Activated CD8-positive, alpha-beta T cell treated with anti-CD3 and anti-CD28 coated beads, Interleukin-2, amount 10 ng/mL, durations not matched to agents 7 days and 5 days (primary cell): ENCODE measurements at regions of chr20 and their contacts with region 1.

Region 1: DNA sequence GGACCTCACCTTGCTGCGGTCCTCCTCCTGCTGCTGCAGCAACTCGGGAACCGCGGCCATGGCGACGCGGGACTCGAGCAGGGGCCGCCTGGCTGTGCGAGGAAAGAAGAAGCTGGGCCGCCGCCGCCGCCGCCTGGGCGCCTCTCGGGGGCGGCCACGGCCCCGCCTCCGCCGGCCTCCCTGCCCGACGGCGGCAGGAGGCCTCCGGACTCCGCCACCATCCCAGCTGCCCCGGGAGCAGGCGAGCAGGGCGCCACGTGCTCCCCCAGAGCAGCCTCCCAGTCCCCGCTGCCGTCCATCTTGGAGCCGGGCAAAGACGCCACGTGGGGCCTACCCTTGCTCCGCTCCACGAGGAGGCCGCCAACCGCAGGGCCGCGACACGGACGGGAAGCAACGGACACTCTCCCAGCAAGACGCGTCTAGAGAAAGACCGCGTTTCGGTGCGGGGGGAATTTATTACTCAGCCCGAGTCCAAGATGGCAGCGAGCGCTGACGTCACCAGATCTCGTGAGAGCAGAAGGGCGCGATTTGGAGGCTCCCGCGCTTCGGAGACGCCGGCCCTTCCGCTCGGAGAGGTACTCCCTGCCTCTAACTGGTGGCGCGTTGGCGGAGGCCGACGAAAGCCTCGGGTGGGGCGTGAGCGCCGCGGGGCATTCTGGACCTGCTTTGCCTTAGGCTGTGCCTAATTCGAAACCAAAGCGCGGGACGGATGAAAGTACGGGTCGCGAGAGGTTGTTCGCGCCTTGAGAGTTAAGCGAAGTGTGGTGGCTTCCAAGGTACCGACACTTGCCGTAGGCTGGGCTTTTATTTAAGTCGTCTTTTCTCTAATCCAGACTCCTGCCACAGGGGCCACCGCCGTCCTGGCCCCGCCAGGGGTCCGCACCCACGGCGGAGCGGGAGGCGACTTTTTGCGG is at the starts of genes MGME1 and SNX5:
- DNase-seq: peak; percentile 100
- ATAC-seq: peak; percentile 94
- H3K4me3 Mint-ChIP-seq: peak within 1 kb of the TSS; percentile 99
- H3K27ac Mint-ChIP-seq: peak within 1 kb of the TSS; percentile 99
- H3K4me1 Mint-ChIP-seq: peaks cover 49% of the 10 kb centered on the region
- H3K27me3 Mint-ChIP-seq: no peaks in the 10 kb centered on the region
- total RNA-seq, gene MGME1: 39.4 to 46.9 TPM
- total RNA-seq, gene SNX5: 168 to 177 TPM

Region 2: GRCh38 chr20:17315407-17316231 is 653.0 kb before region 1 on chr20:
- CTCF ChIA-PET with region 1: no interaction called
- POLR2A ChIA-PET with region 1: no interaction called
- DNase-seq: no peak
- ATAC-seq: no peak
- H3K4me3 Mint-ChIP-seq: no peak overlapping the region
- H3K27ac Mint-ChIP-seq: no peak overlapping the region
- H3K4me1 Mint-ChIP-seq: no peaks in the 10 kb centered on the region
- H3K27me3 Mint-ChIP-seq: peaks cover 21% of the 10 kb centered on the region

Region 3: DNA sequence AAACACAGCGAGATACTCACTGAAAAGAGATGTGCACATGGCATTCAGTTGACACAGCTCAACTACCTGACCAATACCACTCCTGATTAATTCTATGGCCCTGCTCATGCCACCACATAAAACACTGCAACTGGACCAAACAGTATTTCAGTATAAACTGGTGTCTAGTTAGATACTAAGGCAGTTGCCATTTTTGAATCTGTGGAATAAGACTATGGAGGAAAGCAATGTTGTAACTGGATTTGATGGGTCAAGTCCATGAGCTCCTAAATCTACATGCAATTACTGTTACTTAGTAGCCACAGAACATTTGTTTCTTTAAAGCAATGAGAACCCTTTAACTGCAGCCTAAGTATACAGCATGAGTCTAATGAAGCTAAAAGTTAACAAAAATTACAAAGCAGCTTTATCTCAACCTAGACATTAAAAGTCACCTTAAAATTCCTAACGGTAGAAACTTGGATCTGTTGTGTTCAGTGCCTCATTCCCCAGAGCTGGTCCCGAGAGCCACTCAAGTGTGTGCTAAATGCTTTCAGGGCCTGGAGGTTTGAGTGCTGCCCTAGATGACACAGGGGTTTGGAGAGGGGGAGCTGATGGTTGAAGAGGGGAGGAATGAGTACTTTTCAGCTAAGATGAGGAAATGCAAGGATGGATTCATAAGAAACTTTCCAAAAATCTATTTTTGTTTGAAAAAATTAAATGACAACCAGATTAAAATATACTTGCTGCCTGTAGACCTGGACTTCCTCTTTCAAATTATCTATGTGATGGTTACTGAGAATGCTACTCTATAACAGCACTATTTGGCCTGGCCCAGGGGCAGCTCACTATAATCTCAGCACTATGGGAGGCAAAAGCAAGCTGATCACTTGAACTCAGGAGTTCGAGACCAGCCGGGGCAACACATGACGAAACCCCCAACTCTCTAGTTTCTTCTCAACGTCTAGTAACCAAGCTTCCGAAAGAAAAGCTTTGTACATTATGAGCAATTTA is 15.6 kb before region 1 on chr20:
- CTCF ChIA-PET with region 1: interaction called, 17 read pairs
- POLR2A ChIA-PET with region 1: interaction called, 62 read pairs
- DNase-seq: no peak
- ATAC-seq: no peak
- H3K4me3 Mint-ChIP-seq: no peak overlapping the region
- H3K27ac Mint-ChIP-seq: peak overlapping the region; percentile 48
- H3K4me1 Mint-ChIP-seq: peaks cover 36% of the 10 kb centered on the region
- H3K27me3 Mint-ChIP-seq: no peaks in the 10 kb centered on the region

Region 4: DNA sequence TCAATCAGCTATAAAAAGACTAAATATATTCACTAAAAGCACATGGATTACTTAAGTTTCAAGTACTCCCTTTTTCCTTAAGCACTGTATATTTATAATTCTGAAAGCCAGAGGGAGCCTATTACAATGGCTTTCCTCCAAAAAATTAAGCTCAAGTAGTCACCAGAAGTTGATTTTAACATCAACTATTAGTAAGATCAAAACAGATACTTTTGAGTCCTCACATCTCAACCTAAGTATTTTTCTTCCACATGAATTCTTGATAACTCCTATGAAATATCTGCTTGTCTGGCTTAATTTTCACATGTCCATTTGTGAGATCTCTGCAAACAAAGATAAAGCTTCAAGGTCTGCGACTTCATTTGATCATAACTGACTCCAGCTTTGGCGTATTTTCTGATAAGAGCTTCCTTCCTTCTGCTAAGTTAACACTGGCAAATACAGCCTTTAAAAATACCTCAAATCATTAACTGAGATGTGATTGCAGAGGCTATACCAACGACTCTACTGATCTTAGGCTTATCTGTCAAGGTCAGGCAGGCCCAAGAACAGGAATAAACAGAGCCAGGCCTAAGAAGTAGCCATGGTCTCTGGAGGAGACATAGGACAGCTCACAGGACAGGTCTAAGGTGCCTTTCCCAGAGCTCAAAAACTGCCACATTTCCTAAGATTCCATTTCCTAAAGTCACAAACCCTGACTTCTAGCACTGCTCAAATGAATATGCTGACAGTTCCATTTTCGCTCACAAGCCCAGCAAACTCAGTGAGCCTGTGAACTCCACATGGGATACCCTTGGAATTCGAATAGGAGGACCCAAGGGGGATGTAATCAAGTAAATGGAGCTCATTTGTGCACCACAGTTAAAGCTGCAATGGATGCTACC is 10.0 kb before region 1 on chr20:
- CTCF ChIA-PET with region 1: interaction called, 17 read pairs
- POLR2A ChIA-PET with region 1: interaction called, 62 read pairs
- DNase-seq: no peak
- ATAC-seq: no peak
- H3K4me3 Mint-ChIP-seq: no peak overlapping the region
- H3K27ac Mint-ChIP-seq: peak overlapping the region; percentile 72
- H3K4me1 Mint-ChIP-seq: peaks cover 86% of the 10 kb centered on the region
- H3K27me3 Mint-ChIP-seq: no peaks in the 10 kb centered on the region

Region 5: GRCh38 chr20:17987988-17988387 is 19.4 kb after region 1 on chr20:
- CTCF ChIA-PET with region 1: interaction called, 100 read pairs
- POLR2A ChIA-PET with region 1: interaction called, 31 read pairs
- DNase-seq: peak; percentile 44
- ATAC-seq: peak; percentile 71
- H3K4me3 Mint-ChIP-seq: peak overlapping the region; percentile 1
- H3K27ac Mint-ChIP-seq: peak overlapping the region; percentile 78
- H3K4me1 Mint-ChIP-seq: peaks cover 34% of the 10 kb centered on the region
- H3K27me3 Mint-ChIP-seq: no peaks in the 10 kb centered on the region

Region 6: DNA sequence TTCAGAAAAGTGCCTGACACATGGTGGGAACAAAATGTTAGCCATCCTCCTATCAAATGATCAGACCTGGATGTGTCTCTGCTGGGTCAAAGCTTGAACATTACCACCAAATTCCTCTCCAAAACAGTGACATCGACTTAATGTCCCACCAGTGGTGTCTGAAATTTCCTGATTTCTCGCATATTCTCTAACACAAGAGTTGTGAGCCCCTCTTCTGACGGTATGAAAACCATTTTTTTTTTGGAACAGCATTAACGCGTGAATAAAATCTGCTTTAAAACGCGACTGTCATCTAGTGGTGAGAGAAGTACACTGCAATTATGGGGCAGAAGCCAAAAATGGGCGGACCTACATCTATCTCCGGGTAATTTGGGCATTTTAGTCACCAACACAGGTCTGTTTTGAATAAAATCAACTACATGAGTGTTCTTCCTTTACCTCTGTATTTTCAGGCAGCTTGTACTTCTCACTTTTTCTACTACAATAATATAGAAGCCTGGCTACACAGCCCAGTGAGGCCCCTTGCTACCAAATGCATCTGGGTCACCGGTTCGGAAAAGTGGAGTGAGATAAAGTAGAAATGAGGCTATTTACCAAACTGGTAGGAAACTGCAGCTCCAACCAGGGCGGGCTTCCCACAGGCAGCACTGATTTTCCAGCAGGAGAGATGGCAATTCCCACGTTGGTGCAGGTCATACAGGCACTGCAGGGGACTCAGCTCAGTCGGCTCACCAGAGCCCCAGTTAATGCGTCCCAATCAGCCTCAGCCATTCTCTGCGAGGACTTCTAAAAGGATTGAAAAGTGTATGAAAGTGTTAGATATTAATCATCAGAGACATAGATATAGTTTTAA is 27.6 kb after region 1 on chr20:
- CTCF ChIA-PET with region 1: interaction called, 100 read pairs
- POLR2A ChIA-PET with region 1: interaction called, 31 read pairs
- DNase-seq: peak; percentile 63
- ATAC-seq: peak; percentile 49
- H3K4me3 Mint-ChIP-seq: no peak overlapping the region
- H3K27ac Mint-ChIP-seq: peak overlapping the region; percentile 57
- H3K4me1 Mint-ChIP-seq: peaks cover 40% of the 10 kb centered on the region
- H3K27me3 Mint-ChIP-seq: peaks cover 2% of the 10 kb centered on the region

Region 7: DNA sequence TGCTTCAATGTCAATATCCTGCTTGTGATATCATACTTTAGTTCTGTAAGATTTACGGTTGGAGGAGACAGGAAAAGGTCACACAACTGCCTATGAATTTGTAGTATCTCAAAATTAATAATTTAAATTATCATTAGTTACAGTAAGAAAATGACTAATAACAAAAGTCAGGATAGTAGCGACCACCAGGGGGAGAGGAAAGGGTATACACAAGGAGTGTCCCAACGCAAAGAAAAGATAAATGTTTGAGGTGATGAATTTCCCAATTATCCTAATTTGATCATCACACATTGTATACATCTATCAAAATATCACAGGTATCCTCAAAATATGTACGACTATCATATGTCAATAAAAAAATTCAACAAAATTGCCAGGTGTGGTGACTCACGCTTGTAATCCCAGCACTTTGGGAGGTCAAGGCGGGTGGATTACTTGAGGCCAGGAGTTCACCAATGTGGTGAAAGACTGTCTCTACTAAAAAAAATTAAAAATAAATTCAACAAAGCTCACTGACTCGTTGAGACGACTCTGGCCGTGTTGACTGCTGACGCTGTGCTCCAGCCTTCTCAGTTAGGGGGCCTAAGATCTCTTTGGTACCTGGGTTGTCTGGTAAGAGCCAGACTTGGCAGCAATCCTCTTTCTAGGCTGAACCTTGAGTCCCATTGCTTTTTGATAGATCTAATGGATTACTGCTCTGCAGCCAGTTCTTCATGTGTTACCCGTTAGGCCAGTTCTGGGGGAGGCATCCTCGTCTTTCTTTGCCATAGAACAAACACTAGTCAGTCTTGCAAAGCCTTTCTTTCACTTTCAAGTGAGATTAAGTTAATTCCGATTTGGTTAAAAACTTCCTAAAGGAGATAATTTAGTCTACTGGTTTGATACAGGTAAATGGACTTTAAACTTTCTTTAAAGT is 98.1 kb after region 1 on chr20:
- CTCF ChIA-PET with region 1: no interaction called
- POLR2A ChIA-PET with region 1: no interaction called
- DNase-seq: no peak
- ATAC-seq: no peak
- H3K4me3 Mint-ChIP-seq: no peak overlapping the region
- H3K27ac Mint-ChIP-seq: no peak overlapping the region
- H3K4me1 Mint-ChIP-seq: no peaks in the 10 kb centered on the region
- H3K27me3 Mint-ChIP-seq: peaks cover 15% of the 10 kb centered on the region

Region 8: DNA sequence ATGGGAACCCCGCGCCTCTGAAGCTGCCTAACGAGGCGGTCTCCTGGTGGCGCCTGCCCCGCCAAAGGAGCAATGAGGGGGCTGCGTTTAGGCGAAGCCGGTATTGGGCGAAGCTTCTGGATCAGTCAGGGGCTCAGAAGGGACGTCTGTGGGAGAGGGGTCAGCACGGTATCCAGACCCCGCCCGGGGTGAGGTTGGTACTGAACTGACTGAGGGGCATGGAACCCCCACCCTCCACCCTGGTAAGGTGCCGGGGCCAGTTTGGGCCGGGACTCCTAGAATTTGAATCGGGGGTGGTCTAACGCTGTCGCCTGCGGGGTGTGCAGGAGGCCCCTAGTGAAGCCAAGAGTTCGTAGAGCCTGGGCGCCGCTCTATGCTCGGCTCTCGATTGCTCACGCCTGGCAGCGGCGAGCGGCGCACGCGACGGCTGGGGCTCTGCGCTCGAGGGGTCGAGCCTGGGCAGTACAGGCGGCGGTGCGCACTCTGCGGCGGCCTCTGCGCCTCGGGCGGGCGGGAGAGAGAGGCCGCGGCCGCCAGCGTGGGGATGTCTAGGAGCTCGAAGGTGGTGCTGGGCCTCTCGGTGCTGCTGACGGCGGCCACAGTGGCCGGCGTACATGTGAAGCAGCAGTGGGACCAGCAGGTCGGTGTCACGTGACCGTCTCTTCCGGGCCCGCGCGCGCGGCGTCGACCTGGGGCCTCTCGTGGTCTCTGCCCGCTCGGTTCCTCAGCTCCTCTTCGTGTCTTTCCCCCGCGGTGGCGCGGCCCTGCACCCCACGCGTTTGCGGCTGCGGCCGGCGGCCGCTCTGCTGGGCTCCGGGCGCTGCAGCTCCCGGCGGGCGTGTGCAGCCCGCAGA is 169.0 kb after region 1 on chr20 and contains the starts of genes KAT14 and PET117:
- CTCF ChIA-PET with region 1: no interaction called
- POLR2A ChIA-PET with region 1: interaction called, 16 read pairs
- DNase-seq: peak; percentile 91
- ATAC-seq: peak; percentile 90
- H3K4me3 Mint-ChIP-seq: peak within 1 kb of the TSS; percentile 89
- H3K27ac Mint-ChIP-seq: peak within 1 kb of the TSS; percentile 89
- H3K4me1 Mint-ChIP-seq: peaks cover 29% of the 10 kb centered on the region
- H3K27me3 Mint-ChIP-seq: peaks cover 4% of the 10 kb centered on the region
- total RNA-seq, gene KAT14: 14.5 to 16.0 TPM
- total RNA-seq, gene PET117: 11.0 to 12.9 TPM